ENCODE measurements at regions of chr10 and their contacts with region 1.

Region 1: GRCh38 chr10:103888113-103888841 is 29.7 kb downstream of the STN1 start:
- DNase-seq: no peak
- ATAC-seq: peak; percentile 80
- H3K4me3 Mint-ChIP-seq: no peak overlapping the region
- H3K27ac Mint-ChIP-seq: peak overlapping the region; percentile 20
- H3K4me1 Mint-ChIP-seq: peaks cover 36% of the 10 kb centered on the region
- H3K27me3 Mint-ChIP-seq: no peaks in the 10 kb centered on the region

Region 2: GRCh38 chr10:103874730-103875129 is 13.5 kb before region 1 on chr10:
- CTCF ChIA-PET with region 1: interaction called, 12 read pairs
- DNase-seq: no peak
- ATAC-seq: no peak
- H3K4me3 Mint-ChIP-seq: no peak overlapping the region
- H3K27ac Mint-ChIP-seq: no peak overlapping the region
- H3K4me1 Mint-ChIP-seq: no peaks in the 10 kb centered on the region
- H3K27me3 Mint-ChIP-seq: no peaks in the 10 kb centered on the region

Region 3: DNA sequence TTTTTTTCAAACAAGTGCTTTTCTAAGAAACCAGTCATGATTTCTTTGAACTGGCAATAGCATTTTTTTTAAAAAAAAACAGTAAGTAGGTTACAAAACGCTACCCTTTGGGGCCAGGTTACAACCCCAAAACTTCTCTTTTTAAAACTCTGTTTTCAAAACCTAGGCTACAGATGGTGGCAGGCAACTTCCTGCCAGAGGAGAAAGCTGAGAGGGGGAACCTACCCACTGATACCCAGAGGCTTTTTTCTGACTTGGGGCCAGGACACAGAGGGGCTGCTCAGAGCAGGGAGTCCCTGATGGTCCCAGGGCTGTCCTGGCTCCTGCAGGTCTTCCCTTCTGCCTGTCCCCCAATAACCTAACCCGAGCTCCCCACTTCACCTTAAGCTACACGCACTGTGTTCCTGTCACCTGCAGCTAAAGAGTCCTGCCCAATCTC is 22.8 kb after region 1 on chr10:
- CTCF ChIA-PET with region 1: interaction called, 10 read pairs
- DNase-seq: peak; percentile 80
- ATAC-seq: peak; percentile 58
- H3K4me3 Mint-ChIP-seq: peak overlapping the region; percentile 68
- H3K27ac Mint-ChIP-seq: peak overlapping the region; percentile 98
- H3K4me1 Mint-ChIP-seq: peaks cover 74% of the 10 kb centered on the region
- H3K27me3 Mint-ChIP-seq: no peaks in the 10 kb centered on the region

Region 4: GRCh38 chr10:103983367-103983911 is 95.2 kb after region 1 on chr10:
- CTCF ChIA-PET with region 1: interaction called, 10 read pairs
- DNase-seq: no peak
- ATAC-seq: peak; percentile 95
- H3K4me3 Mint-ChIP-seq: peak overlapping the region; percentile 55
- H3K27ac Mint-ChIP-seq: peak overlapping the region; percentile 81
- H3K4me1 Mint-ChIP-seq: peaks cover 69% of the 10 kb centered on the region
- H3K27me3 Mint-ChIP-seq: no peaks in the 10 kb centered on the region

Region 5: GRCh38 chr10:104121520-104122224 is 233.4 kb after region 1 on chr10 and contains the start of gene SFR1:
- CTCF ChIA-PET with region 1: interaction called, 31 read pairs
- DNase-seq: peak; percentile 99
- ATAC-seq: peak; percentile 96
- H3K4me3 Mint-ChIP-seq: peak within 1 kb of the TSS; percentile 82
- H3K27ac Mint-ChIP-seq: peak within 1 kb of the TSS; percentile 97
- H3K4me1 Mint-ChIP-seq: peaks cover 33% of the 10 kb centered on the region
- H3K27me3 Mint-ChIP-seq: peaks cover 7% of the 10 kb centered on the region
- total RNA-seq, gene SFR1: 14.9 to 17.4 TPM

Measured in activated CD8-positive, alpha-beta memory T cell treated with anti-CD3 and anti-CD28 coated beads, Interleukin-2, amount 10 ng/mL, durations not matched to agents 7 days and 5 days (primary cell).